ENCODE measurements at regions of chr1 and their contacts with region 1.

Region 1: DNA sequence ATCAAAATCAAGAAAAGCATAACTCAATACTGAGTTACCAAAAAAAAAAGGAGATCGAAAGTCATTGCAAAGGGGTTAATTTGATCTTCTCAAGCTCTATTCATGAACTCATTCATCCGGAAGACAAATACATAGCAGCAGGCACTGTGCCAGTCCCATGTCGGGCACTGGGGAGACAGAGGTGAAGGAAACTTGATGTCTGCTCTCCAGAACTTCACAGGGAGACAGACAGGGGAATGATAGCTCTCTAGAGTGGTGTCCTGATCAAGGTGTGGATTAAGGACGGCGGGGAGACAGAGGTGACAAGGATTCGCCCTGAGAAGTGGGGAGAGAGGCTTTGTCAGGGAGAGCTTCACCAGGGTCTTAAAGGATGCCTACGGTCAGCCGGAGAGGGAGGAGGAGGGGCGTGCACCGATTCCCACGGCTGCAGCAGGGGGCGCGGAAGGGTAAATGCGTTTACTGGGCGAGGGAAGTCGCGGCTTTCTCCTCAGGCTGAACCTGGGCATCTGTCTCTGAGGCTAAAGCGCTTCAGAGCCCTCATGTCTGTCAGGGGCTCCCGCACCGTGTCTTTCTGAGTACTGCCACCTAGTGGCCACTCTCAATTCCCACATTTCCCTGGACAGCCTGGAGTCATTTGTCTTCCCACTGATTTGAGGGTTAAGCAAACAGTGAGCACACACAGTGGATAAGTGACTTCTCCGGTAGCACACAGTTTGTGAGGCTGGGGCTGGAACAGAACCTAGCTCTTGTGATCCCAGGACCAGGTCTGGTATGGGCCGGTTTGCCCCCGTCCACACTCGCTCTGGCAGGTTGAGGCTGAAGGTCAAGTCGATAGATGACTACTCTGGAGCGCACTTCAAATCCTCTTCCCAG is 152.8 kb downstream of the TENT5C start:
- DNase-seq: peak; percentile 96
- ATAC-seq: peak; percentile 94
- H3K4me3 ChIP-seq: peak overlapping the region; percentile 68
- H3K27ac ChIP-seq: peak overlapping the region; percentile 53
- H3K4me1 ChIP-seq: peaks cover 22% of the 10 kb centered on the region
- H3K27me3 ChIP-seq: no peaks in the 10 kb centered on the region
- CTCF ChIP-seq: peak; percentile 91

Region 2: GRCh38 chr1:117284399-117285215 is 474.1 kb before region 1 on chr1:
- CTCF ChIA-PET with region 1: no interaction called
- POLR2A ChIA-PET with region 1: no interaction called
- intact Hi-C with region 1: loop called (anchors 10 kb)
- DNase-seq: peak; percentile 83
- ATAC-seq: peak; percentile 83
- H3K4me3 ChIP-seq: no peak overlapping the region
- H3K27ac ChIP-seq: no peak overlapping the region
- H3K4me1 ChIP-seq: peaks cover 8% of the 10 kb centered on the region
- H3K27me3 ChIP-seq: no peaks in the 10 kb centered on the region
- CTCF ChIP-seq: peak; percentile 92

Region 3: DNA sequence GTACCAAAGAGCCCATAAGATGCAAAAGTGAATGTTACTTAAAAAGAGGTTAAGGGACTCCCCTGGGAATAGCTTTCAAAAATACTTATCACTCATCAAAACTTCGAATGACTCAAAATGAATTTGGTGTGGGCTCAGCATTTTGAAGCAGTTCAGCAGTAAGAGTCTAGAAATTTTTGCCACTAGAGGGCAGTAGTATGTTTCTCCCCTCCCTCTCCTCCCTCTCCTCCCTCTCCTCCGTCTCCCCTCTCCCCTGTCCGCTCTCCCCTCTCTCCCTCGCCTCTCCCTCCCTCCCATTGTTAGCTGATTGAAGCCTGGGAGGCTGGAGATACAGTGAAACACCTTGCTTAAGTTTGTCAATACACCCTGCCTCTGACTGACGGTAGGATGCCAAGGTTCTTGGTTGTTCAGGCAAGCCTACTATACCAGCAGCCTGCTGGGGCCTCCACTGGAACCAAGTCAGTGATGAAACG is 223.6 kb before region 1 on chr1:
- CTCF ChIA-PET with region 1: interaction called, 8 read pairs
- POLR2A ChIA-PET with region 1: interaction called, 3 read pairs
- intact Hi-C with region 1: loop called (anchors 1 kb)
- DNase-seq: peak; percentile 83
- ATAC-seq: peak; percentile 82
- H3K4me3 ChIP-seq: no peak overlapping the region
- H3K27ac ChIP-seq: no peak overlapping the region
- H3K4me1 ChIP-seq: peaks cover 20% of the 10 kb centered on the region
- H3K27me3 ChIP-seq: no peaks in the 10 kb centered on the region
- CTCF ChIP-seq: peak; percentile 82

Region 4: DNA sequence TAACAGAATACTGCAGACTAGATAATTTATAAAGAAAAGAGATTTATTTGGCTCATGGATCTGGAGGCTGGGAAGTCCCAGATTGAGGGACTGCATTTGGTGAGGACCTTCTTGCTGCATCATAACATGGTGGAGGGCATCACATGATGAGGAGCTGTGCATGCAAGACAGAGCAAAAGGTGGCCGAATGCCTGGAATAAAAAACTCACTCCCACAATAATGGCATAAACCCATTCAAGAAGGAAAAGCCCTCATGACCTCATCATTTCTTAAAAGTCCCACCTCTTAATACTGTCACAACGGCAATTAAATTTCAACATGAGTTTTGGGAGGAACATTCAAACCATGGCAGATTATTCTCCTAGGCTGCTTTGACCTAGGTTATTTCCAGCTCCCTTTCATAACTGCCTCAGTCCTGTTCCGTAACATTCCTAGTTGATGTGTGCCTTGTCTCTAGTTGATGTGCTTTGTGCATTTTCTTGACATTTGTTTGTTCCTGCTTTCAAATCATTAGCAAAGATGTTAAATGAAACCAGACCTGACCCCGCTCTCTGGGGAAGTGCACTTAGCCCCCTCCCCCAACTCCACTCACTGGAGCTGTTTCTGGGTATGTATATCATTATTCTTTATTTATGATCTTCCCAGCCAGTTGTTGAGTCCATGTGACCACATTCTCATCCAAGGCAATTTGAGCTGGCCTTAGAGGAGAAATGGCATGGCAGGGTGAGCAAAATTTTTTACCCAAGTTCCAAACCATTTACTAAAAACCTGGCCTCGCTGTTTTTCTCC is 22.2 kb after region 1 on chr1:
- CTCF ChIA-PET with region 1: no interaction called
- POLR2A ChIA-PET with region 1: no interaction called
- intact Hi-C with region 1: no loop called
- DNase-seq: no peak
- ATAC-seq: no peak
- H3K4me3 ChIP-seq: no peak overlapping the region
- H3K27ac ChIP-seq: no peak overlapping the region
- H3K4me1 ChIP-seq: no peaks in the 10 kb centered on the region
- H3K27me3 ChIP-seq: no peaks in the 10 kb centered on the region
- CTCF ChIP-seq: no peak

Region 5: GRCh38 chr1:117814856-117815797 is 56.4 kb after region 1 on chr1:
- CTCF ChIA-PET with region 1: no interaction called
- POLR2A ChIA-PET with region 1: no interaction called
- intact Hi-C with region 1: loop called (anchors 5 kb)
- DNase-seq: peak; percentile 57
- ATAC-seq: peak; percentile 60
- H3K4me3 ChIP-seq: no peak overlapping the region
- H3K27ac ChIP-seq: peak overlapping the region; percentile 20
- H3K4me1 ChIP-seq: peaks cover 25% of the 10 kb centered on the region
- H3K27me3 ChIP-seq: no peaks in the 10 kb centered on the region
- CTCF ChIP-seq: no peak

Region 6: GRCh38 chr1:117842240-117843170 is 83.8 kb after region 1 on chr1:
- CTCF ChIA-PET with region 1: no interaction called
- POLR2A ChIA-PET with region 1: no interaction called
- intact Hi-C with region 1: loop called (anchors 2 kb)
- DNase-seq: peak; percentile 84
- ATAC-seq: peak; percentile 63
- H3K4me3 ChIP-seq: no peak overlapping the region
- H3K27ac ChIP-seq: peak overlapping the region; percentile 51
- H3K4me1 ChIP-seq: peaks cover 40% of the 10 kb centered on the region
- H3K27me3 ChIP-seq: no peaks in the 10 kb centered on the region
- CTCF ChIP-seq: peak; percentile 53

Measured in PC-3 (cell line).